GM13977 (cell line): ENCODE measurements at regions of chr12 and their contacts with region 1.

Region 1: GRCh38 chr12:21169878-21170472 is 39.0 kb downstream of the SLCO1B1 start:
- DNase-seq: peak; percentile 24
- CTCF ChIP-seq: peak; percentile 79

Region 2: DNA sequence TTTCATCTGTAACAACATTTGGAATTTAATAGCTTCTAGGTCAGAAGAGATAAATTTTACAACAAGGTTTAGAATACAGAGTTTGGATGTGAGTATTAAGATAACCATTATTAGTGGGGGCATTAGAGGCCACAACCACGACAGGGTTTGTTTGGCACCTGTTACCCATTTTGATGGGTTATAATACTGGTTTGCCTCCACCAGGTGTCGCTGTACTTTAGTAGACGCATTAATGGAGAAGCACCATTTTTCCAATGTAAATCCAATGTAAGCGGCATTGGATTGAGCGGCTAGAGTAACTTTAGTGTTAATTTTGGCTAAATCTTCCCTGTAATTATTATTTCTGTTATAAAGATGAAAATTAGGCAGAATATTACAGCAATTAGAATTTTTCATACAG is 223.2 kb before region 1 on chr12:
- in situ Hi-C with region 1: loop called (anchors 25 kb)
- DNase-seq: peak; percentile 2
- CTCF ChIP-seq: peak; percentile 71

Region 3: GRCh38 chr12:21117995-21118394 is 52.0 kb before region 1 on chr12:
- in situ Hi-C with region 1: no loop called
- DNase-seq: no peak
- CTCF ChIP-seq: no peak